ENCODE measurements at regions of chr13 and their contacts with region 1.

Region 1: GRCh38 chr13:110509971-110510786 is 51.3 kb downstream of the RAB20 start:
- DNase-seq: no peak
- ATAC-seq: peak; percentile 13

Region 2: GRCh38 chr13:110561344-110562035 is 51.3 kb after region 1 on chr13 and contains the start of gene RAB20:
- intact Hi-C with region 1: loop called (anchors 10 kb)
- DNase-seq: peak; percentile 91
- ATAC-seq: peak; percentile 88
- total RNA-seq, gene RAB20: 10.3 TPM